ENCODE measurements at regions of chr12 and their contacts with region 1.

Region 1: GRCh38 chr12:121264135-121264534 is 32.4 kb downstream of the CAMKK2 start:
- DNase-seq: no peak
- ATAC-seq: no peak
- H3K4me3 ChIP-seq: no peak overlapping the region
- H3K4me3 Mint-ChIP-seq: no peak overlapping the region
- H3K27ac ChIP-seq: no peak overlapping the region
- H3K27ac Mint-ChIP-seq: no peak overlapping the region
- H3K4me1 ChIP-seq: no peaks in the 10 kb centered on the region
- H3K4me1 Mint-ChIP-seq: peaks cover 3% of the 10 kb centered on the region
- H3K27me3 ChIP-seq: no peaks in the 10 kb centered on the region
- H3K27me3 Mint-ChIP-seq: no peaks in the 10 kb centered on the region
- CTCF ChIP-seq: no peak

Region 2: DNA sequence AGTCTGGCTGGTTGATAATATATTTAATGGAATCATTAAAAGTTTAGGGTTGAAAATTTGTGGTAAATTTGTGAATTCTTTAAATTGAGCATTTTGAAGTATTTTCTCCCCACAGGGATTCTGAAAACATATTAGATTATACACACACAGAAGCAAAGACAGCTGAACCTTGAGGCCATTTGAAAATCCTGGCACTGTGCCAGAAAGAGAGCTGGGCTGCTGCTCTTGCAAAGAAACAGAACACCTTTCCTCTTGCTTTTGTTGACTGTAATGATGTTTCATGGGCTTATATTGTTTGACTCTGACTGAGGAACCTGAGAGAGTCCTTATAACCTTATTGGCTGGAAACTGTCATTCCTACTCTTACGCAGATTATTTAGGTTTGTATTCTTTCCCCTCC is 140.6 kb after region 1 on chr12:
- CTCF ChIA-PET with region 1: no interaction called
- POLR2A ChIA-PET with region 1: no interaction called
- intact Hi-C with region 1: no loop called
- DNase-seq: no peak
- ATAC-seq: no peak
- H3K4me3 ChIP-seq: no peak overlapping the region
- H3K4me3 Mint-ChIP-seq: no peak overlapping the region
- H3K27ac ChIP-seq: no peak overlapping the region
- H3K27ac Mint-ChIP-seq: no peak overlapping the region
- H3K4me1 ChIP-seq: peaks cover 15 to 16% of the 10 kb centered on the region in 2 donors
- H3K4me1 Mint-ChIP-seq: peaks cover 25% of the 10 kb centered on the region
- H3K27me3 ChIP-seq: no peaks in the 10 kb centered on the region
- H3K27me3 Mint-ChIP-seq: no peaks in the 10 kb centered on the region
- CTCF ChIP-seq: no peak

Region 3: GRCh38 chr12:122767691-122768090 is 1503.6 kb after region 1 on chr12:
- CTCF ChIA-PET with region 1: no interaction called
- POLR2A ChIA-PET with region 1: interaction called, 15 read pairs
- intact Hi-C with region 1: no loop called
- DNase-seq: no peak
- ATAC-seq: no peak
- H3K4me3 ChIP-seq: no peak overlapping the region
- H3K4me3 Mint-ChIP-seq: no peak overlapping the region
- H3K27ac ChIP-seq: peak overlapping the region in 1 of 2 donors; percentile 40
- H3K27ac Mint-ChIP-seq: no peak overlapping the region
- H3K4me1 ChIP-seq: no peaks in the 10 kb centered on the region
- H3K4me1 Mint-ChIP-seq: no peaks in the 10 kb centered on the region
- H3K27me3 ChIP-seq: no peaks in the 10 kb centered on the region
- H3K27me3 Mint-ChIP-seq: no peaks in the 10 kb centered on the region
- CTCF ChIP-seq: no peak

Measured in B cell (primary cell).